ENCODE measurements at regions of chr20 and their contacts with region 1.

Region 1: DNA sequence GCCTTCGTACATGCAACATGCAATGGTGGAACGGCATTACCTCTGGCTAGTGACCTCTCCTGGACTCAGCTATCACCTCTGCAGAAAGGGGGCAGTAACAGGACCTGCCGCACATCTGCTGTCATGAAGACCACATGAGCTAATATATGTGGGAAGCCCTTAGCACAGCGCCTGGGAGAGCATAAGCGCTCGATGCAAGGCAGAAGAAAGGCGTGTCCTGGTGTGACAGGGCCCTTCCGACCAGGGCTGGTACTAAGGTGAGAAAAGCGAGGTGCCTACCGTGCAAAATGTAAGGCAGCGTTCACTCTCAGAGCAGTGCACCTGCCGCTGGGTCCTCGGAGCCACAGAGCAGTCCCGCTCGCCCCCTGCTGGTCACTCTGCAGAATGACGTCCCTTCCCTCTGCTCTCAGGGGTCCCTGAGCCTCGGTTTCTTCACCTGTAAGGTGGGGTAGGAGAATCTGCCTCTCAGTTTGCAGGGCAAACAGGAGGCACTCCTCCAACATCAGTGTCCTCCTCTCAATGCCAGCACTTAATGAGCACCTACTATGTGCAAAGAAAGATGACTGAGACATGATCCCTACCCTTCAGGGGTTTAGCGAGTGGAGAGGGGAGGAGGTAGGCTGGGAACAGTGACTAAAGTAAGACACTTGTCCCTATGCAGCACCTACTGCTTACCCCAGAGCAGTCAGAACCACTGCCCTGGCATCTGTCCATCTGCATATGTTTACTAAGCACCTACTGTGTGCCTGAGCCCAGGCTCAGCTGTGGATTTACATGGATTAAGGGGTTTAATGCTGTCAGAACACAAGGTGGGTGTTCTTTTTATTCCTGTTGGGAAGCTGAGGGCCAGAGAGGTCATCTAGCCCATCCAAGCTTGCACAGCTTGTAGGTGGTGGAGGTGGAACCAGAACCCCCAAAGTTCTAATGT is 41.1 kb upstream of the PTGIS start:
- DNase-seq: peak; percentile 83
- CTCF ChIP-seq: peak; percentile 97

Region 2: GRCh38 chr20:49541733-49542513 is 67.1 kb before region 1 on chr20:
- in situ Hi-C with region 1: loop called (anchors 10 kb)
- DNase-seq: peak; percentile 80
- CTCF ChIP-seq: peak; percentile 90

Region 3: GRCh38 chr20:49846206-49846807 is 237.3 kb after region 1 on chr20:
- in situ Hi-C with region 1: loop called (anchors 5 kb)
- DNase-seq: peak; percentile 68
- CTCF ChIP-seq: peak; percentile 50